ENCODE measurements at regions of chr6 and their contacts with region 1.

Region 1: GRCh38 chr6:163413345-163414116 is 987 bp upstream of the QKI start:
- DNase-seq: peak; percentile 91
- H3K4me3 Mint-ChIP-seq: peak overlapping the region; percentile 76
- H3K27ac Mint-ChIP-seq: peak overlapping the region; percentile 88
- H3K4me1 Mint-ChIP-seq: peaks cover 24% of the 10 kb centered on the region
- H3K27me3 Mint-ChIP-seq: no peaks in the 10 kb centered on the region

Region 2: DNA sequence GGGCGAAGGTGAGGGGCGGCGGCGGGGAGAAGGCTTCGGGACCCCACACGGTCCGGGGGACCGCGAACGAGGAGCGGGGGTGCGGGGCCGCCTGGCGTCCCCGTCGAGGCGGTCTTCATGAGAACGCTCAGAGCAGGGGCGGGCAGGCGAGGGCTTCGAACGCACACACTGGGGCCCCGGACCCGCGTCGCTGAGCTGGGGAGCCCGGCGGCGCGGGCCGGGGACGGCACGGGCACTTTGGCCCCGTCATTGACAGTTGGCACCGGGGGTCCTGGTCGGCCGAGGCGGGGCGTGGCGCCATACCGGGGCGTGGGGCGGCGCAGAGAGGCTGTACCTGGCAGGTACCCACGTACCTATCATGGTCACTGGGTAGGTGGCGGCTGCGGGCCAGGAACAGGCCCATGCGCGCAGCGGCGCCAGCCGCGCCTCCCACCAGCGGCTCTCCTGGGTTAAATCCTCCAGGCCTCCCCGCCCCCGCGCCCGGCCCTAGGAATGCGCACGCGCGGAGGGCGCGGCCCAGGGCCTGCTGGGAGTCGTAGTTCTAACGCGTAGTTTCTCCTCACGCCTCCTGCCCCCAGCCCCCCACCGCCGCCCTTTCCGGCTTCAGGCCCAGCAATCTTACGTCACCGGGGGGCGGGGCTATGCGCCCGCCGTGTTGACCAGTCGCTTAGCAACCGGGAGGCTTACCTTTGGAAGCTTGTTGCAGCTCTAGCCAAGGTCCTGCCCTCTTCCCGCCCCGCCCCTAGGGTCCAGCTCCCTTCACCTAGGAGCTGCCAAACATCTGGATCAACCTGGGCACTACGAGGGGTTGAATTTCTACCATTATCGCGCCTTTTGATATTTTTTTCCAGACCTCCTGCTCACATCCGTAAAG is 686.0 kb before region 1 on chr6 and contains the starts of genes PACRG and PRKN:
- CTCF ChIA-PET with region 1: no interaction called
- POLR2A ChIA-PET with region 1: no interaction called
- intact Hi-C with region 1: loop called (anchors 2 kb)
- DNase-seq: peak; percentile 98
- H3K4me3 Mint-ChIP-seq: peak within 1 kb of the TSS; percentile 83
- H3K27ac Mint-ChIP-seq: peak within 1 kb of the TSS; percentile 57
- H3K4me1 Mint-ChIP-seq: peaks cover 9% of the 10 kb centered on the region
- H3K27me3 Mint-ChIP-seq: peaks cover 2% of the 10 kb centered on the region
- total RNA-seq, gene PACRG: not detected
- total RNA-seq, gene PRKN: 0.82 to 1.00 TPM

Region 3: DNA sequence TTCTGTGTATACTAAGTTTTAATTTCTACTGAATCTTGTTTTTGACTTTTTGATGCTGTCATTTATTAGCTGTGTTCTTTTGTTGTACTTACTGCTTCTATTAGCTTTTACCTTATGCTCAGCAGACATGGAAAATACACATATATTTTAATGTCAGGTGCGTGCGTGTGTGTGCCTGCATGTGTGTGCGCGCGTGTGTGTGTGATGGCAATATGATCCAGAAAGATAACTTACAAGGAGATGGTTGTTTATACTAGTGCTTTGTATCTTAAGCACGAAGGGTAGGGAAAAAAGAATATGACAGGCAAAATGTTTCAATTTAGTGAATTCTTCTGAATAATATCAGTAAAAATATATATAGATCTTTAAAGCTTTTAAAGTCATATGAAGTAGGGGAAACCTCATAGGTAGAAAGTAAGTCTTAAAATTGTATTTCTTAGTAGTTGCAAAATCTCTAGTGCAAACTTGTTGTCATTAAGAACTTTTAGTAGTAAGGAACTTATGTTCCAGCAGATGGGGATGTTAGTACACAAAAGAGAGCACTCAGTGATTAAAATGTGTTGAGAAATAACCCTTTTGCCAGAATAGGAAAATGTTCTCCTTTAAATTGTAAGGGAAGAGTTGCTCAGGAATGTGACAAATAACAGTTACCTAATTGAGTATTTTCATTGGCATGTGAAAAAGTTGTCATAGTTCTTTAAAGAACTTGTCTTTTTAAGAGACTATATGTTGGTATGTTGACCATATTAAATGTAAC is 14.1 kb after region 1 on chr6:
- CTCF ChIA-PET with region 1: no interaction called
- POLR2A ChIA-PET with region 1: no interaction called
- intact Hi-C with region 1: loop called (anchors 1 kb)
- DNase-seq: no peak
- H3K4me3 Mint-ChIP-seq: no peak overlapping the region
- H3K27ac Mint-ChIP-seq: no peak overlapping the region
- H3K4me1 Mint-ChIP-seq: peaks cover 49% of the 10 kb centered on the region
- H3K27me3 Mint-ChIP-seq: no peaks in the 10 kb centered on the region

Region 4: GRCh38 chr6:163513570-163514166 is 100.1 kb after region 1 on chr6:
- CTCF ChIA-PET with region 1: no interaction called
- POLR2A ChIA-PET with region 1: no interaction called
- intact Hi-C with region 1: no loop called
- DNase-seq: no peak
- H3K4me3 Mint-ChIP-seq: no peak overlapping the region
- H3K27ac Mint-ChIP-seq: no peak overlapping the region
- H3K4me1 Mint-ChIP-seq: peaks cover 14% of the 10 kb centered on the region
- H3K27me3 Mint-ChIP-seq: no peaks in the 10 kb centered on the region

Region 5: DNA sequence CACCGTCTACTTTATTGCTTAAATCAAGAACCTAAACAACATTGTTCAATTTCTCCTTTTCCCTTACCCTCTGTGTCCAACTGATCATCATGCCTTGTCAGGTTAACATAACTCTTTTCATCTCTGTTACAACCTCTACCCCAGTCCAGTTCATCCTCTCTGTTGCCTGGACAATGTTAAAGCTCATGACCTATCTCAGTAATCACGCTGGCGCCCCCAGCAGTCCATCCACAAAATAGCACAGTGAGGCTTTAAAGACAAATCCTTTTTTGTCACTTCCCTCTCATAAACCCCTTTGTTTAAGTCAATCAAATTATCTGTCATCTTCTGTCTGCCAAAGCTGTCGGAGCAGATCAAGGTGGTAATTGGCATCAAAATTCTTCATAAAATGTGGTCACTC is 141.1 kb after region 1 on chr6:
- CTCF ChIA-PET with region 1: interaction called, 22 read pairs
- POLR2A ChIA-PET with region 1: interaction called, 3 read pairs
- intact Hi-C with region 1: loop called (anchors 1 kb)
- DNase-seq: peak; percentile 77
- H3K4me3 Mint-ChIP-seq: no peak overlapping the region
- H3K27ac Mint-ChIP-seq: no peak overlapping the region
- H3K4me1 Mint-ChIP-seq: peaks cover 7% of the 10 kb centered on the region
- H3K27me3 Mint-ChIP-seq: no peaks in the 10 kb centered on the region

Region 6: GRCh38 chr6:164927288-164928056 is 1513.9 kb after region 1 on chr6:
- CTCF ChIA-PET with region 1: no interaction called
- POLR2A ChIA-PET with region 1: no interaction called
- intact Hi-C with region 1: loop called (anchors 10 kb)
- DNase-seq: peak; percentile 67
- H3K4me3 Mint-ChIP-seq: no peak overlapping the region
- H3K27ac Mint-ChIP-seq: no peak overlapping the region
- H3K4me1 Mint-ChIP-seq: no peaks in the 10 kb centered on the region
- H3K27me3 Mint-ChIP-seq: no peaks in the 10 kb centered on the region

Measured in activated CD4-positive, alpha-beta memory T cell treated with anti-CD3 and anti-CD28 coated beads for 36 hours (primary cell).